ENCODE measurements at regions of chrX and their contacts with region 1.

Region 1: GRCh38 chrX:79146640-79147390 is 2.3 kb downstream of the GPR174 start:
- DNase-seq: no peak
- ATAC-seq: peak; percentile 64
- H3K4me3 ChIP-seq: peak overlapping the region; percentile 71
- H3K4me3 Mint-ChIP-seq: peak overlapping the region; percentile 66 to 96 (median 92)
- H3K27ac ChIP-seq: peak overlapping the region; percentile 85
- H3K27ac Mint-ChIP-seq: peak overlapping the region; percentile 82 to 98 (median 91)
- H3K4me1 ChIP-seq: peaks cover 10 to 16% of the 10 kb centered on the region in 2 donors
- H3K4me1 Mint-ChIP-seq: peaks cover 10 to 47% (median 28%) of the 10 kb centered on the region in 7 donors
- H3K27me3 ChIP-seq: no peaks in the 10 kb centered on the region
- H3K27me3 Mint-ChIP-seq: no peaks in the 10 kb centered on the region

Region 2: GRCh38 chrX:79036157-79036880 is 110.5 kb before region 1 on chrX:
- CTCF ChIA-PET with region 1: no interaction called
- POLR2A ChIA-PET with region 1: no interaction called
- intact Hi-C with region 1: loop called in 1 of 2 experiments (anchors 5 kb)
- DNase-seq: peak in 2 of 9 donors; percentile 0 to 5
- ATAC-seq: no peak
- H3K4me3 ChIP-seq: no peak overlapping the region
- H3K4me3 Mint-ChIP-seq: peak overlapping the region in 4 of 10 donors; percentile 8 to 46 (median 23)
- H3K27ac ChIP-seq: no peak overlapping the region
- H3K27ac Mint-ChIP-seq: peak overlapping the region in 3 of 9 donors; percentile 23 to 63 (median 32)
- H3K4me1 ChIP-seq: no peaks in the 10 kb centered on the region
- H3K4me1 Mint-ChIP-seq: peaks cover 0 to 38% (median 26%) of the 10 kb centered on the region in 7 donors
- H3K27me3 ChIP-seq: no peaks in the 10 kb centered on the region
- H3K27me3 Mint-ChIP-seq: no peaks in the 10 kb centered on the region

Region 3: DNA sequence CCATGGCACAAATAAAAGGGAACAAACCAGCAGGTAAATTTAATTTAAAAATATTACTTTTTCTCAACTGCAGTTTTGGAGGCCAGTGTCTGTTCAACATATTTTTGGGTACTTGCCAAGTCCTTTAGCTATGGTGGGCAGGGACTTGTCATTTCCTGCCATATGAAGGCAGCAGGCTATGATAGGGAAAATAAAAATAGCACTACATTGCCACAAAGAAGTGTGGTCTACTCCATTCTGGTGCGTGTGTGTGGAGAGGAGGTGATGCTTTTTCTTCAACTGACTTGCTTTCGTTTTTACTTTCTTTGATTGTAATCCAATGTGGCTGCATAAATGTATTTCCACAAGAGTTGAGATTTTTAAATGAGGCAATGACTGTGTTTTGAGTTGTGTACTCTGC is 14.8 kb after region 1 on chrX:
- CTCF ChIA-PET with region 1: interaction called, 4 read pairs
- POLR2A ChIA-PET with region 1: interaction called, 93 read pairs
- intact Hi-C with region 1: loop called (anchors 1 to 2 kb)
- DNase-seq: peak in 8 of 9 donors; percentile 22 to 85 (median 77)
- ATAC-seq: peak; percentile 95
- H3K4me3 ChIP-seq: peak overlapping the region; percentile 52
- H3K4me3 Mint-ChIP-seq: peak overlapping the region; percentile 80 to 96 (median 90)
- H3K27ac ChIP-seq: peak overlapping the region; percentile 76
- H3K27ac Mint-ChIP-seq: peak overlapping the region; percentile 95 to 99 (median 97)
- H3K4me1 ChIP-seq: peaks cover 48 to 50% of the 10 kb centered on the region in 2 donors
- H3K4me1 Mint-ChIP-seq: peaks cover 16 to 79% (median 68%) of the 10 kb centered on the region in 7 donors
- H3K27me3 ChIP-seq: no peaks in the 10 kb centered on the region
- H3K27me3 Mint-ChIP-seq: no peaks in the 10 kb centered on the region

Region 4: GRCh38 chrX:79167462-79167861 is 20.6 kb after region 1 on chrX:
- CTCF ChIA-PET with region 1: interaction called, 4 read pairs
- POLR2A ChIA-PET with region 1: interaction called, 93 read pairs
- intact Hi-C with region 1: no loop called
- DNase-seq: peak in 4 of 9 donors; percentile 27 to 45 (median 32)
- ATAC-seq: peak; percentile 54
- H3K4me3 ChIP-seq: peak overlapping the region; percentile 42
- H3K4me3 Mint-ChIP-seq: peak overlapping the region; percentile 56 to 87 (median 74)
- H3K27ac ChIP-seq: peak overlapping the region; percentile 76
- H3K27ac Mint-ChIP-seq: peak overlapping the region; percentile 79 to 99 (median 95)
- H3K4me1 ChIP-seq: peaks cover 65 to 73% of the 10 kb centered on the region in 2 donors
- H3K4me1 Mint-ChIP-seq: peaks cover 20 to 93% (median 87%) of the 10 kb centered on the region in 7 donors
- H3K27me3 ChIP-seq: no peaks in the 10 kb centered on the region
- H3K27me3 Mint-ChIP-seq: no peaks in the 10 kb centered on the region

Region 5: GRCh38 chrX:79270401-79270800 is 123.6 kb after region 1 on chrX:
- CTCF ChIA-PET with region 1: interaction called, 8 read pairs
- POLR2A ChIA-PET with region 1: interaction called, 6 read pairs
- intact Hi-C with region 1: loop called in 1 of 2 experiments (anchors 1 kb)
- DNase-seq: peak; percentile 29 to 76 (median 68)
- ATAC-seq: peak; percentile 98
- H3K4me3 ChIP-seq: no peak overlapping the region
- H3K4me3 Mint-ChIP-seq: peak overlapping the region; percentile 17 to 77 (median 56)
- H3K27ac ChIP-seq: peak overlapping the region; percentile 61
- H3K27ac Mint-ChIP-seq: peak overlapping the region in 8 of 9 donors; percentile 84 to 94 (median 90)
- H3K4me1 ChIP-seq: peaks cover 24 to 34% of the 10 kb centered on the region in 2 donors
- H3K4me1 Mint-ChIP-seq: peaks cover 13 to 68% (median 45%) of the 10 kb centered on the region in 7 donors
- H3K27me3 ChIP-seq: no peaks in the 10 kb centered on the region
- H3K27me3 Mint-ChIP-seq: no peaks in the 10 kb centered on the region